Psoas muscle (tissue), 8 donors: ENCODE measurements at regions of chr6 and their contacts with region 1.

Region 1: DNA sequence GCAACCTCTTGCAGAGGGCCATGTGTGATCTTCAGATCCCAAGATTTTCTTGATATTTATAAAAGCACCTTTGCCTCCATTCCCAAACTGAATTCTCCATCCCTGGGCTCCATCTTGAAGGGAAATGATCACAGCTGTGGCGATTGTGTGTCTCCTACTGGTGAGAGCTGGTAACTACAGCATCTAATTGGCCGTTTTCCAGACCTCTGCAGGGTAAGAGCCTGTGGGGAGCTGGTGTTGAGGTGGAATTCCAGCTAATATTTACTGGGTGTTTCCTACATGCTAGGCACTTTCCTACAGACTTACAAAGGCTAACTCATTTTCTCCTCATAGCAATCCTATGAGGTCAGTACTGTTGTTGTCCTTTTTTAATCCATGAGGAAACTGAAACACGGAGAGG is 59.2 kb upstream of the FNDC1 start:
- DNase-seq: no peak
- ATAC-seq: peak in 1 of 4 donors; percentile 29
- H3K4me3 ChIP-seq: no peak overlapping the region
- H3K27ac ChIP-seq: no peak overlapping the region
- H3K4me1 ChIP-seq: peaks cover 17% of the 10 kb centered on the region
- H3K27me3 ChIP-seq: no peaks in the 10 kb centered on the region
- CTCF ChIP-seq: peak; percentile 40

Region 2: DNA sequence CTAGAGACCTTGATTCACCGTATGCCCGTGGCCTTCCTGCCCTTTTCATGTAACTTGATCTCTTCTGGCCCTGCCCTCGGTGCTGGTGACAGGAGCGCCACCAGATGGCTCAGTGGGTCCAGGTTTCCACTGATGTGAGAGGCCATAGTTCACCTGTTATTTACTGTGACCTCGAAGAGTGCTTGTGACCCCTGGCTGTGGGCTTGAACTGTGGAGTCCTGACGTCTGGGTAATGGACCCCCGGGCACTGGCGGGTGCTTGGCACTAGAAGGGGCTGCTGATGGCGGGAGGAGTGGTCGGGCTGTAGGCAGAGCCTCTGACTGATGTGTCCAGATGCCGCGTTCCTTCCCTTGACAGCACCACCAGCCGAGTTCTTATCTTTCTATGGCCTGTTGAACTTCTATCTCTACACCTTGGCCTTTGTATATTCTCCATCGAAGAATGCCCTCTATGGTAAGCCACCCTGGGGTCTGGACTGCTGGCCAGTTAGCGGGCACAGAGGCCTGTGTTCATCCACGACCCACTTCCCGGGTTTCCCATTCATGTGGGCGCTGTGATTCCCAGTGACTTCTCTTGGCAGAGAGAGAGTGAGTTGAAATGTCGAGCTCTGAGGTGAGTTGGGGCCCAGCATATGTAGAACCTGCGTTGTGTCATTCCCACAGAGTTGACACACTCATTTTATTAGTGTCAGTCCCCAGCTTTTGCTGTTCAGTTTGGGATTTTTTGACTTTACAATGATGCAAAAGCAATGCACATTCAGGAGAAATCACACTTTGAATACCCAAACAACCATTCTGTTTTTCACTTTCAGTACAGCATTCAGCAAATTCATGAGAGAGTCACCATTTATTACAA is 480.4 kb before region 1 on chr6:
- intact Hi-C with region 1: loop called in 1 of 2 experiments (anchors 10 kb)
- DNase-seq: peak; percentile 39 to 78
- ATAC-seq: peak; percentile 71 to 83 (median 80)
- H3K4me3 ChIP-seq: no peak overlapping the region
- H3K27ac ChIP-seq: peak overlapping the region; percentile 50
- H3K4me1 ChIP-seq: peaks cover 27% of the 10 kb centered on the region
- H3K27me3 ChIP-seq: no peaks in the 10 kb centered on the region
- CTCF ChIP-seq: peak; percentile 63

Region 3: GRCh38 chr6:158737710-158738615 is 372.1 kb before region 1 on chr6:
- intact Hi-C with region 1: no loop called
- DNase-seq: no peak
- ATAC-seq: peak; percentile 86 to 93 (median 90)
- H3K4me3 ChIP-seq: no peak overlapping the region
- H3K27ac ChIP-seq: peak overlapping the region; percentile 66
- H3K4me1 ChIP-seq: no peaks in the 10 kb centered on the region
- H3K27me3 ChIP-seq: no peaks in the 10 kb centered on the region
- CTCF ChIP-seq: no peak

Region 4: GRCh38 chr6:158991017-158991723 is 118.8 kb before region 1 on chr6:
- intact Hi-C with region 1: no loop called
- DNase-seq: no peak
- ATAC-seq: no peak
- H3K4me3 ChIP-seq: no peak overlapping the region
- H3K27ac ChIP-seq: no peak overlapping the region
- H3K4me1 ChIP-seq: no peaks in the 10 kb centered on the region
- H3K27me3 ChIP-seq: no peaks in the 10 kb centered on the region
- CTCF ChIP-seq: no peak

Region 5: DNA sequence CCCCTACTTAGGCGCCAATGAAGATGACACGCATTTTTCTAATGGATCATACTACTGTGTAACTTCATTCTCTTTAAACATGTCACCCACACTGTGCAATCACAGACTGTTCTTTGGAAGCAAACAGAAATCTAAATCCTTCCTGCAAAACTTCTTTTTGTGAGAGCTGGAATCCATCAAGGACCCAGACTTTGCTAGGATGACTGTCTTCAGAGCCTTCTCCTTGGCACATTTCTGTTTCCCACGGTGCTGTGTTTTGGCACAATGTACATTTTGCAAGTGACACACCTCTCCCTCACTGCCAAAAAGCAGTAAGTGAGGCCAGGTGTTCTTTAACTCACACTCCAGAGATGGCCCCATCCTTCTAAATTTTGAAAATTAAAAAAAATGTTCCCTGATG is 43.5 kb before region 1 on chr6:
- intact Hi-C with region 1: loop called in 1 of 2 experiments (anchors 1 kb)
- DNase-seq: no peak
- ATAC-seq: no peak
- H3K4me3 ChIP-seq: no peak overlapping the region
- H3K27ac ChIP-seq: no peak overlapping the region
- H3K4me1 ChIP-seq: no peaks in the 10 kb centered on the region
- H3K27me3 ChIP-seq: no peaks in the 10 kb centered on the region
- CTCF ChIP-seq: no peak

Region 6: GRCh38 chr6:159080217-159080976 is 29.6 kb before region 1 on chr6:
- intact Hi-C with region 1: no loop called
- DNase-seq: no peak
- ATAC-seq: no peak
- H3K4me3 ChIP-seq: no peak overlapping the region
- H3K27ac ChIP-seq: no peak overlapping the region
- H3K4me1 ChIP-seq: no peaks in the 10 kb centered on the region
- H3K27me3 ChIP-seq: no peaks in the 10 kb centered on the region
- CTCF ChIP-seq: no peak